Endothelial cell of umbilical vein (primary cell): ENCODE measurements at regions of chr13 and their contacts with region 1.

Region 1: GRCh38 chr13:103883164-103883563 is 816.9 kb upstream of the SLC10A2 start:
- DNase-seq: peak; percentile 95
- H3K4me3 ChIP-seq: no peak overlapping the region
- H3K27ac ChIP-seq: peak overlapping the region; percentile 88
- H3K4me1 ChIP-seq: peaks cover 12% of the 10 kb centered on the region
- H3K27me3 ChIP-seq: no peaks in the 10 kb centered on the region
- CTCF ChIP-seq: peak; percentile 60 to 80
- POLR2A ChIP-seq: no peak

Region 2: GRCh38 chr13:102913914-102914313 is 969.2 kb before region 1 on chr13:
- CTCF ChIA-PET with region 1: no interaction called
- POLR2A ChIA-PET with region 1: no interaction called
- dilution Hi-C with region 1: no loop called
- intact Hi-C with region 1: loop called (anchors 5 kb)
- DNase-seq: peak; percentile 73
- H3K4me3 ChIP-seq: no peak overlapping the region
- H3K27ac ChIP-seq: no peak overlapping the region
- H3K4me1 ChIP-seq: no peaks in the 10 kb centered on the region
- H3K27me3 ChIP-seq: peaks cover 5% of the 10 kb centered on the region in 2 experiments
- CTCF ChIP-seq: no peak
- POLR2A ChIP-seq: no peak

Region 3: GRCh38 chr13:104006625-104007075 is 123.5 kb after region 1 on chr13:
- CTCF ChIA-PET with region 1: interaction called, 5 read pairs
- POLR2A ChIA-PET with region 1: no interaction called
- dilution Hi-C with region 1: no loop called
- intact Hi-C with region 1: loop called (anchors 1 kb)
- DNase-seq: no peak
- H3K4me3 ChIP-seq: no peak overlapping the region
- H3K27ac ChIP-seq: no peak overlapping the region
- H3K4me1 ChIP-seq: peaks cover 28% of the 10 kb centered on the region
- H3K27me3 ChIP-seq: no peaks in the 10 kb centered on the region
- CTCF ChIP-seq: no peak
- POLR2A ChIP-seq: no peak

Region 4: GRCh38 chr13:104106705-104107393 is 223.7 kb after region 1 on chr13:
- CTCF ChIA-PET with region 1: interaction called, 10 read pairs
- POLR2A ChIA-PET with region 1: no interaction called
- dilution Hi-C with region 1: no loop called
- intact Hi-C with region 1: loop called (anchors 1 kb)
- DNase-seq: peak; percentile 91
- H3K4me3 ChIP-seq: no peak overlapping the region
- H3K27ac ChIP-seq: peak overlapping the region; percentile 98
- H3K4me1 ChIP-seq: peaks cover 27% of the 10 kb centered on the region
- H3K27me3 ChIP-seq: no peaks in the 10 kb centered on the region
- CTCF ChIP-seq: peak; percentile 3 to 19
- POLR2A ChIP-seq: no peak

Region 5: GRCh38 chr13:104408733-104409132 is 525.6 kb after region 1 on chr13:
- CTCF ChIA-PET with region 1: no interaction called
- POLR2A ChIA-PET with region 1: no interaction called
- dilution Hi-C with region 1: no loop called
- intact Hi-C with region 1: loop called (anchors 5 kb)
- DNase-seq: peak; percentile 54
- H3K4me3 ChIP-seq: no peak overlapping the region
- H3K27ac ChIP-seq: peak overlapping the region; percentile 55
- H3K4me1 ChIP-seq: peaks cover 13% of the 10 kb centered on the region
- H3K27me3 ChIP-seq: no peaks in the 10 kb centered on the region
- CTCF ChIP-seq: no peak
- POLR2A ChIP-seq: no peak

Region 6: DNA sequence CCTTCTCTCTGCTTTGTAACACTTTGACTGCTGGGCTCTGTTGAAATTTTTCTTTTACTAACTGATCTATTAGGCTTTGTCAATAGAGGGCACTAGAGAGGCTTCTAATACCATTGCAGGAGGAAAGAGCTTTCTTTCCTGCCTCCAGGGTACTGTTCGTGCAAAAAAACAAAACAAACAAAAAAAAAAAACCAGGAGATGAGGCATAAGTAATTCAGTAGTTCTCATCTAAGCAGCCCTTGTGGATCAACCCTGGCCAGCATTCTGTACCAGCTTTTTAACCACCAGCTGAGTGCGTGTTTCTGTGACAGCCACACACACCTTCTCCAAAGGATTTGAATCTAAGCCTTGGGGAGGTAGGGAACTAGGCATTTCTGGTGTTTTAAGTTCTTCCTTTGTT is 890.6 kb after region 1 on chr13:
- CTCF ChIA-PET with region 1: interaction called, 19 read pairs
- POLR2A ChIA-PET with region 1: no interaction called
- dilution Hi-C with region 1: no loop called
- intact Hi-C with region 1: loop called (anchors 1 kb)
- DNase-seq: peak; percentile 54
- H3K4me3 ChIP-seq: no peak overlapping the region
- H3K27ac ChIP-seq: no peak overlapping the region
- H3K4me1 ChIP-seq: no peaks in the 10 kb centered on the region
- H3K27me3 ChIP-seq: no peaks in the 10 kb centered on the region
- CTCF ChIP-seq: peak; percentile 59 to 61
- POLR2A ChIP-seq: no peak

Region 7: GRCh38 chr13:105202354-105202753 is 1319.2 kb after region 1 on chr13:
- CTCF ChIA-PET with region 1: interaction called, 10 read pairs
- POLR2A ChIA-PET with region 1: no interaction called
- dilution Hi-C with region 1: no loop called
- intact Hi-C with region 1: loop called (anchors 1 kb)
- DNase-seq: peak; percentile 69
- H3K4me3 ChIP-seq: no peak overlapping the region
- H3K27ac ChIP-seq: no peak overlapping the region
- H3K4me1 ChIP-seq: no peaks in the 10 kb centered on the region
- H3K27me3 ChIP-seq: no peaks in the 10 kb centered on the region
- CTCF ChIP-seq: peak; percentile 51 to 70
- POLR2A ChIP-seq: no peak